ENCODE measurements at regions of chr10 and their contacts with region 1.

Region 1: DNA sequence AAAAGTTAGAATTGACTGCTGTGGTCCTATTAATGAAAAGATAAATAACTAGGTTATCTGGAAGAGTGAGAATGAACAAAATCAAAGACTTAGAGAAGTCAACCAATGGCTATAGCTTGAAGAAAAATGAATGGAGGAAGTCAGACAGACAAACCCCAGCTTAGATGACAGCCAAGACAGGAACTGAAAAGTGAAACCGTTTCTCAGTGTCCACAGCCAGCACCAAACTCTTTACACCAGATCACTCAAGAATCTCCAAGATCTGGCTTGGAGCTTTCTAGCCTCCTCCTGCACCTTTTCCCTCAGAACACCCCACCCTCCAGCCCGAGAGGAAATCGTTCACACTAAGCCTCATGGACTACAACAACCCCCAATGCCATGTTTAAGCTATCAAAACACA is 167.0 kb downstream of the SFMBT2 start:
- DNase-seq: no peak
- ATAC-seq: peak; percentile 80
- H3K4me3 Mint-ChIP-seq: peak overlapping the region; percentile 57
- H3K27ac Mint-ChIP-seq: peak overlapping the region; percentile 87
- H3K4me1 Mint-ChIP-seq: peaks cover 45% of the 10 kb centered on the region
- H3K27me3 Mint-ChIP-seq: no peaks in the 10 kb centered on the region

Region 2: DNA sequence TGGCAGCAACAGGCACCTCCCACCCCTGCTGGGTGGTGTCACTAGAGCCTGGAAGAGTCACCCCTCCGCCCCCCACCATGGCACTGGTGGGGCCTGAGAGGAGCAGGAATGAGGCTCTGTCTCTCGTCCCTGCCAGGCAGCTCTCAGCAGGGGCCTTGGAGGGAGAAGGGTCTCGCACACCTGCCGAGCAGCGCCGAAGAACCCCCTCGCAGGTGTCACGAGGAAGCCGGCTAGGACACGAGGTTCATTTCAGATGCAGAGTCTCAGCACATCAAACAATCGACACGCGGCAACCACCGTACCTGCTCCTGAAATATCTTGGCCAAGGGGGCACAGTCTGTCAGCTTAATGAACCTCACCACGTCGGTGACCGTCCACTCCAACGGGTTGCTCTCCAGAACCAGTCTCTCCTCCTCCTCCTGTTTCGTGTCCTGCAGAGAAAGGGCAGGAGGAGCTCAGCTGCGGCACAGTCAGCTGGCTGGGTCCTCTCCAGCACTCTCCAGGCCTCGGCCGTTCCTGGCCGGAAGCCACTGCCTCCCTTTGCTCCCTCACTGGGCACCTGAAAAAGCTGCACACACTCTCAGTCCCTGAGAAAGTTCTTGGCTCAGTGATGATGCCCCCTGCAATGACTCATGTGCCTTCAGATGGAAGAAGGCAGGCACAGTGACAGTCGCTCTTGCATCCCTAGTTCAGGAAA is 73.1 kb before region 1 on chr10:
- POLR2A ChIA-PET with region 1: no interaction called
- DNase-seq: no peak
- ATAC-seq: no peak
- H3K4me3 Mint-ChIP-seq: no peak overlapping the region
- H3K27ac Mint-ChIP-seq: no peak overlapping the region
- H3K4me1 Mint-ChIP-seq: no peaks in the 10 kb centered on the region
- H3K27me3 Mint-ChIP-seq: no peaks in the 10 kb centered on the region

Region 3: GRCh38 chr10:7231509-7232414 is 12.1 kb before region 1 on chr10:
- POLR2A ChIA-PET with region 1: no interaction called
- DNase-seq: no peak
- ATAC-seq: no peak
- H3K4me3 Mint-ChIP-seq: no peak overlapping the region
- H3K27ac Mint-ChIP-seq: no peak overlapping the region
- H3K4me1 Mint-ChIP-seq: peaks cover 20% of the 10 kb centered on the region
- H3K27me3 Mint-ChIP-seq: no peaks in the 10 kb centered on the region

Region 4: DNA sequence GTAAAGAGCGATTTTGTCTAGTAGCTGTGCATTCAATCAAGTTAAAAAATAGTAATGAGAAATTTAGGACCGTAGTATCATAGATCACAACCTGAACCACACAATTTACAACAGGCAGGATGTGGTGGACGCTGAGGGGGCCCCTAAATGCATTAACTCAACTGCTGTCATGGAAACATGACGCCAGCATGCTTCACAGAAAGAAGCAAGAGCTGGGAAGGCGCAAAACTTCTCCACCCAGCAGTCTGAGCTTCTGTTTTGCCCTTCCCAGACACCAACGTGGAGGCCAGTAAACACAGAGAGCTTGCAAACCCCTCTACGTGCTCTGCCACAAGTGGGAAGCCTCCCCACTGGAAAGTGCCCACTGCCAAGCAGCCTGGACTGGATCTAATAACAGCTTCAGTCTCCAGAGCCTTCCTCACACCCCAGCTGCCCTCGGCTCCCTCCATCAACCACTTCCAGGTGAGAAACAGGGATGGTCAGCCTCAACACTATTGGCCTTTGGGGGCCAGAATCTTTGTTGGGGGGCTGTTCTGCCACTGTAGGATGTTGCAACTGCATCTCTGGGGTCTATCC is 15.2 kb after region 1 on chr10:
- POLR2A ChIA-PET with region 1: interaction called, 10 read pairs
- DNase-seq: peak; percentile 70
- ATAC-seq: peak; percentile 77
- H3K4me3 Mint-ChIP-seq: peak overlapping the region; percentile 62
- H3K27ac Mint-ChIP-seq: peak overlapping the region; percentile 81
- H3K4me1 Mint-ChIP-seq: peaks cover 51% of the 10 kb centered on the region
- H3K27me3 Mint-ChIP-seq: no peaks in the 10 kb centered on the region